Mammary epithelial cell (primary cell): ENCODE measurements at regions of chr5 and their contacts with region 1.

Region 1: GRCh38 chr5:75336625-75337339 is at the start of gene HMGCR:
- DNase-seq: peak; percentile 100
- H3K4me3 ChIP-seq: peak within 1 kb of the TSS; percentile 72 to 96 (median 84)
- H3K27ac ChIP-seq: peak within 1 kb of the TSS; percentile 93
- H3K4me1 ChIP-seq: peaks cover 35% of the 10 kb centered on the region
- H3K27me3 ChIP-seq: no peaks in the 10 kb centered on the region
- CTCF ChIP-seq: peak; percentile 24 to 51
- total RNA-seq, gene HMGCR: 106 to 142 TPM

Region 2: GRCh38 chr5:75156585-75156984 is 180.2 kb before region 1 on chr5:
- CTCF ChIA-PET with region 1: no interaction called
- dilution Hi-C with region 1: no loop called
- in situ Hi-C with region 1: no loop called
- intact Hi-C with region 1: loop called (anchors 5 kb)
- DNase-seq: peak; percentile 19
- H3K4me3 ChIP-seq: no peak overlapping the region
- H3K27ac ChIP-seq: no peak overlapping the region
- H3K4me1 ChIP-seq: peaks cover 7% of the 10 kb centered on the region
- H3K27me3 ChIP-seq: no peaks in the 10 kb centered on the region
- CTCF ChIP-seq: peak; percentile 24 to 37

Region 3: GRCh38 chr5:75281716-75282465 is 54.9 kb before region 1 on chr5:
- CTCF ChIA-PET with region 1: interaction called, 4 read pairs
- dilution Hi-C with region 1: no loop called
- in situ Hi-C with region 1: no loop called
- intact Hi-C with region 1: loop called (anchors 1 kb)
- DNase-seq: peak; percentile 56
- H3K4me3 ChIP-seq: no peak overlapping the region
- H3K27ac ChIP-seq: no peak overlapping the region
- H3K4me1 ChIP-seq: peaks cover 5% of the 10 kb centered on the region
- H3K27me3 ChIP-seq: no peaks in the 10 kb centered on the region
- CTCF ChIP-seq: no peak

Region 4: GRCh38 chr5:75511435-75512384 is 174.9 kb after region 1 on chr5 and contains the starts of genes CERT1 and POLK:
- CTCF ChIA-PET with region 1: no interaction called
- dilution Hi-C with region 1: no loop called
- in situ Hi-C with region 1: no loop called
- intact Hi-C with region 1: loop called (anchors 5 kb)
- DNase-seq: peak; percentile 99
- H3K4me3 ChIP-seq: peak within 1 kb of the TSS; percentile 78 to 88 (median 88)
- H3K27ac ChIP-seq: peak within 1 kb of the TSS; percentile 82
- H3K4me1 ChIP-seq: peaks cover 12% of the 10 kb centered on the region
- H3K27me3 ChIP-seq: no peaks in the 10 kb centered on the region
- CTCF ChIP-seq: no peak
- total RNA-seq, gene CERT1: 25.7 to 27.5 TPM
- total RNA-seq, gene POLK: 26.4 to 32.8 TPM